PC-3 (cell line): ENCODE measurements at regions of chrX and their contacts with region 1.

Region 1: DNA sequence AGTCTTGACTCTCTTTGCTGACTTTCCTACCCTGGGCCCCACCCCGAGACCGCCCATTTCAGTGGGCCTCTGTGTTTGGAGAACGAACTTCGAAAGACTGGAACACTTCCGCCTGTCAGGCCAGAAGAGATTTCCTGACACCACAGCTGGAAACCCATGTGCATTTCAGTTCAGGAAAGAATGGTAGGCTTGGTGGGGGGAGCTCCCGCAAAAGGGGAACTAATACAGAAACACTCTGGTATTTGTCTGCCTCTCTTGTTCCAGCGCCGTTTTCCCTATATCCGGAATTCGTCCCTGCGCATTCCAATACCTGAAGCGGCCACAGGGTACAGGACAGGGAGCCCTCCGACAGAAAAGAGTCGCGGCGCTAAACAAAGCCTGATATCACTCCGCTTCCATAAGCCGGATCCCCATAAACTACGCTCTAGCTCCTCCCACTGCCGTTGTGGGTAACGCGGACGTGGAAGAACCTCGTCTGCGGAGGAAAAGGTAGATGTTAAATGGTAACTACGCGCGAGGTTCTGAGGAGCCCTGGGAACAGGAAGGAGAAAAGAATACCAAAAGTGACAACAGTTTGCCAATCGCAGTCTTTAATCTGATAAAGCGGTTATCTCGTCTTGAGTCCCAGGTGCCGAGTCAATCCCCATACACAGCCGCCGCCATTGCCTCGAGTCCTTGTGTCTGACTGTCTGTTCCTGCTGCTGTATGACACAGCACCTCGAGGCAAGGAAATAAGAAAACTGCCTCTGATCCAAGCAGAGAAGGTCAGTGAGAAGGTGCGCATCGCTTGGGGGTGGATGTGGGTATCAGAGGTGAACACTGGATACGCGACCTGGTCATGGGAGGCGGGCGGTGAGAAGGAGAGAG is at the start of gene ARMCX5:
- DNase-seq: peak; percentile 89
- ATAC-seq: peak; percentile 90
- H3K4me3 ChIP-seq: peak within 1 kb of the TSS; percentile 94
- H3K27ac ChIP-seq: peak within 1 kb of the TSS; percentile 49
- H3K4me1 ChIP-seq: peaks cover 15% of the 10 kb centered on the region
- H3K27me3 ChIP-seq: no peaks in the 10 kb centered on the region
- CTCF ChIP-seq: no peak
- total RNA-seq, gene ARMCX5: 22.6 and 39.2 TPM in 2 replicates

Region 2: GRCh38 chrX:102558607-102559006 is 40.7 kb before region 1 on chrX:
- CTCF ChIA-PET with region 1: no interaction called
- POLR2A ChIA-PET with region 1: no interaction called
- intact Hi-C with region 1: no loop called
- DNase-seq: no peak
- ATAC-seq: no peak
- H3K4me3 ChIP-seq: no peak overlapping the region
- H3K27ac ChIP-seq: no peak overlapping the region
- H3K4me1 ChIP-seq: no peaks in the 10 kb centered on the region
- H3K27me3 ChIP-seq: peaks cover 26% of the 10 kb centered on the region
- CTCF ChIP-seq: no peak

Region 3: DNA sequence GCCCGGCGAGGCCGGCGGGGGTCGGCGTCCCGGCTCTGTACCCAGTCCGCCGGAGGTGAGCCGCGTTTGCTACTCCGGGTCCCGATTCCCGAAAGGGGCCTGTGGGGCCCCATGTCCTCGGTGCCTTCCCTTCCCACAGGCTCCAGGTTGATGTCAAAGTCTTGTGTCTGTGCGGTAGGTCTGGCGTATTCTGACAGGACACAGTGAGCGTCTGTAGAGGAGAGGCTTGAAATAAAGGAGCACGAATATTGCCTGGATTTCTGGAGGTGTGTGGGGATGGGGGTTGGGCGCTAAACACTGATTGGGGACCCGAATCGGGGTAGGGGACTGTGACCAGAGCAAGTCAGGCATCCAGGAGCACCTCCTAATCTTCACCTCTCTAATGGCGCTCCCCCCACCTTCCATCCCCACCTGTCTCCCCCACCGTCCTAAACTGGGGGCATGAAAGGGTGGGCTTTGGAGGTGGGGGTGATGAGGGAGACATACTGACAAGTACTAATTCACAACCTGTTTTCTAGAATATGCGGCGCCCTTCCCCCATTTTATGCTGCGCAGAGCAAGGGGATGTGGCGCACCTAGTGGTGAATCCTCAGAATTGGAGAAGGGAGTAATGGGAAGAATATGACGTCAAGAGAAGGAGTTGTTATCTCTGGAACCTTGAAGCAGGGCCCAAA is 113.8 kb after region 1 on chrX:
- CTCF ChIA-PET with region 1: no interaction called
- POLR2A ChIA-PET with region 1: no interaction called
- intact Hi-C with region 1: loop called (anchors 2 kb)
- DNase-seq: peak; percentile 66
- ATAC-seq: peak; percentile 67
- H3K4me3 ChIP-seq: peak overlapping the region; percentile 84
- H3K27ac ChIP-seq: no peak overlapping the region
- H3K4me1 ChIP-seq: no peaks in the 10 kb centered on the region
- H3K27me3 ChIP-seq: no peaks in the 10 kb centered on the region
- CTCF ChIP-seq: peak; percentile 68

Region 4: GRCh38 chrX:102768987-102769761 is 169.9 kb after region 1 on chrX:
- CTCF ChIA-PET with region 1: no interaction called
- POLR2A ChIA-PET with region 1: interaction called, 3 read pairs
- intact Hi-C with region 1: loop called (anchors 2 kb)
- DNase-seq: peak; percentile 96
- ATAC-seq: peak; percentile 77
- H3K4me3 ChIP-seq: peak overlapping the region; percentile 97
- H3K27ac ChIP-seq: peak overlapping the region; percentile 69
- H3K4me1 ChIP-seq: peaks cover 20% of the 10 kb centered on the region
- H3K27me3 ChIP-seq: no peaks in the 10 kb centered on the region
- CTCF ChIP-seq: no peak

Region 5: GRCh38 chrX:102835504-102836146 is 236.3 kb after region 1 on chrX:
- CTCF ChIA-PET with region 1: no interaction called
- POLR2A ChIA-PET with region 1: no interaction called
- intact Hi-C with region 1: loop called (anchors 5 kb)
- DNase-seq: peak; percentile 53
- ATAC-seq: peak; percentile 57
- H3K4me3 ChIP-seq: no peak overlapping the region
- H3K27ac ChIP-seq: no peak overlapping the region
- H3K4me1 ChIP-seq: peaks cover 5% of the 10 kb centered on the region; the same call in 1 of the 2 replicates
- H3K27me3 ChIP-seq: no peaks in the 10 kb centered on the region
- CTCF ChIP-seq: peak; percentile 79